ENCODE measurements at regions of chr3 and their contacts with region 1.

Region 1: DNA sequence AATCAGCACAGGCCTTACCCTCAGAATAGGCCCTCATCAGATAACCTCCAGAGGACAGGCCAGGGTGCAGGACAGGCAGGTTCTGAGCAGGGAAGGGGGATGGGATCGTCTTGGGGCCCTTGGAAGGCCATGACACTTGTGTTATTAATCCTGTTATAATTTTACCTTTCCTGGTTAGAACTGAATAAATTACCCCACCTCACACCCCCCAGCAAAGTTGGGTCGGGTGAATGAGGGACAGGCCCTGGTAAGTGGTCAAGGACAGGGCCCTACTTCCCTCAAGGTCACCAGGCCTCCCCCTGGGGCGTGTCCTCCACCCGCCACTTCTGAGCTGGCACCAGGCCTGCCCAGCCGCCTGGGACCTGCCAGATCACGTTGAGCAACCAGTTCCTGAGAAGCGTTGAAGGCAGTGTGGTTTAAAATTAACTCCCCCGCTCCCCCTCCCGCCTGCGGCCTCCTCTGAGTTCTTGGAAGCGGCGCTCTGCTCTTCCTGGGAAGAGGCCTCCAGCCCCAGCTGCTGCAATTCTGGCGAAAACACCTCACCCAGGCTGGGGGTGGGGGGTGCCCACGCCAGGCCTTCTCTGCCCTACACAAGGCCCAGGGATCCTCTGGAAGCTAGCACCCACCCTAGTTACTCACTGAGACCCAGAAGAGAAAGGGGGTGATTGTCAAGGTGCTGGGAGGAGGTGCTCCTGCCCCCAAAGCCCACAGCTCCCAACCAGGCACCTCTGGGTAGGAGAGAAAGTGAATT is 10.6 kb downstream of the CISH start:
- DNase-seq: peak; percentile 41 to 88 (median 60)
- ATAC-seq: peak; percentile 71
- H3K4me3 ChIP-seq: peak overlapping the region; percentile 34
- H3K4me3 Mint-ChIP-seq: peak overlapping the region; percentile 63
- H3K27ac ChIP-seq: peak overlapping the region; percentile 73 to 86
- H3K27ac Mint-ChIP-seq: peak overlapping the region; percentile 93
- H3K4me1 ChIP-seq: peaks cover 80% of the 10 kb centered on the region
- H3K4me1 Mint-ChIP-seq: peaks cover 64% of the 10 kb centered on the region
- H3K27me3 ChIP-seq: no peaks in the 10 kb centered on the region
- H3K27me3 Mint-ChIP-seq: no peaks in the 10 kb centered on the region
- CTCF ChIP-seq: no peak

Region 2: GRCh38 chr3:49955636-49956035 is 645.4 kb before region 1 on chr3:
- CTCF ChIA-PET with region 1: no interaction called
- POLR2A ChIA-PET with region 1: no interaction called
- intact Hi-C with region 1: no loop called
- DNase-seq: no peak
- ATAC-seq: no peak
- H3K4me3 ChIP-seq: no peak overlapping the region
- H3K4me3 Mint-ChIP-seq: no peak overlapping the region
- H3K27ac ChIP-seq: no peak overlapping the region
- H3K27ac Mint-ChIP-seq: peak overlapping the region; percentile 30
- H3K4me1 ChIP-seq: peaks cover 3% of the 10 kb centered on the region
- H3K4me1 Mint-ChIP-seq: peaks cover 28% of the 10 kb centered on the region
- H3K27me3 ChIP-seq: no peaks in the 10 kb centered on the region
- H3K27me3 Mint-ChIP-seq: no peaks in the 10 kb centered on the region
- CTCF ChIP-seq: no peak

Region 3: GRCh38 chr3:50587806-50588758 is 12.9 kb before region 1 on chr3:
- CTCF ChIA-PET with region 1: interaction called, 114 read pairs
- POLR2A ChIA-PET with region 1: interaction called, 62 read pairs
- intact Hi-C with region 1: no loop called
- DNase-seq: peak in 6 of 14 experiments; percentile 45 to 75 (median 55)
- ATAC-seq: peak; percentile 45
- H3K4me3 ChIP-seq: no peak overlapping the region
- H3K4me3 Mint-ChIP-seq: peak overlapping the region; percentile 42
- H3K27ac ChIP-seq: peak overlapping the region in 1 of 2 donors; percentile 58
- H3K27ac Mint-ChIP-seq: peak overlapping the region; percentile 86
- H3K4me1 ChIP-seq: peaks cover 88% of the 10 kb centered on the region
- H3K4me1 Mint-ChIP-seq: peaks cover 49% of the 10 kb centered on the region
- H3K27me3 ChIP-seq: no peaks in the 10 kb centered on the region
- H3K27me3 Mint-ChIP-seq: no peaks in the 10 kb centered on the region
- CTCF ChIP-seq: no peak

Region 4: GRCh38 chr3:50971487-50971924 is 370.5 kb after region 1 on chr3:
- CTCF ChIA-PET with region 1: no interaction called
- POLR2A ChIA-PET with region 1: no interaction called
- intact Hi-C with region 1: no loop called
- DNase-seq: peak; percentile 20 to 85 (median 47)
- ATAC-seq: peak; percentile 96
- H3K4me3 ChIP-seq: no peak overlapping the region
- H3K4me3 Mint-ChIP-seq: no peak overlapping the region
- H3K27ac ChIP-seq: no peak overlapping the region
- H3K27ac Mint-ChIP-seq: no peak overlapping the region
- H3K4me1 ChIP-seq: peaks cover 12% of the 10 kb centered on the region
- H3K4me1 Mint-ChIP-seq: peaks cover 17% of the 10 kb centered on the region
- H3K27me3 ChIP-seq: no peaks in the 10 kb centered on the region
- H3K27me3 Mint-ChIP-seq: no peaks in the 10 kb centered on the region
- CTCF ChIP-seq: peak; percentile 95